CD4-positive, alpha-beta T cell (primary cell): ENCODE measurements at regions of chr7 and their contacts with region 1.

Region 1: DNA sequence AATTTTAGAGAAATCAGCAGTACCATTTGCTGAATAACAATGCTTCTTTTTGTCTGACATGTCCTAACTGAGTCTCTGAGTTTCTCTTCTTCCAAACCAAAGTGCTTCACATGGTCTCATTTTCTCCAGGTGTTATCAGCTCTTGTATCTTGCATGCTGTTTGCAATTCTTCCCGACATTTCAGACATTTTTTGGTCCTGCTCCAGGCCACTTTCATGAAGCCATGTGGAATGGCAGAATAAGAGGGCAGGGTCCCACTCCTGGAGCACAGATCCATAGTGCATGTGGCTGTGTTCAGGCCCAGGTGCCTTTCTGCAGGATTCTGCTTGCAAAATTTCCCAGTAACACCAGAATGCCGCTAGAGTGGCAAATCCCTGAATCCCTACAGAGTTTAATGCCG is 916.2 kb downstream of the NXPH1 start:
- DNase-seq: no peak
- ATAC-seq: no peak
- H3K4me3 ChIP-seq: no peak overlapping the region
- H3K4me3 Mint-ChIP-seq: no peak overlapping the region
- H3K27ac ChIP-seq: no peak overlapping the region
- H3K27ac Mint-ChIP-seq: no peak overlapping the region
- H3K4me1 ChIP-seq: no peaks in the 10 kb centered on the region
- H3K4me1 Mint-ChIP-seq: no peaks in the 10 kb centered on the region
- H3K27me3 ChIP-seq: no peaks in the 10 kb centered on the region
- H3K27me3 Mint-ChIP-seq: no peaks in the 10 kb centered on the region
- CTCF ChIP-seq: no peak

Region 2: DNA sequence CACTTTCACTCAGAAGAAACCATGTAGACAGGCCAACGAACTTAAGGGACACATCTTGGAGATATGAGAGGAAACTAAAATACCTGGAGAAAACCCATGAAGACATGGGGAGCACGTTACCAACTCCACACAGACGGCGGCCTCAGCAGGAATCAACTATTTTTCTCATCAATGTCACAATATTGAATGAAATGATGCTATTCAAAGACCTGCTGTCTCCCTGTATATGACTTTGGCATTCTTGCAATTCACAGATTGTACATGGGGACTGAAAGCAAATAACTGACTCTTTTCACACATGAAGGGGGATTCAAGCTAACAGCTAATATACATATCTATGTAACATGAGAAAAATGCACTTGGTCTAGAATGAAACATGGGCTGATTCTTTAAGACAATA is 47.2 kb before region 1 on chr7:
- CTCF ChIA-PET with region 1: no interaction called
- POLR2A ChIA-PET with region 1: no interaction called
- intact Hi-C with region 1: loop called in 1 of 2 experiments (anchors 5 kb)
- DNase-seq: no peak
- ATAC-seq: no peak
- H3K4me3 ChIP-seq: no peak overlapping the region
- H3K4me3 Mint-ChIP-seq: no peak overlapping the region
- H3K27ac ChIP-seq: no peak overlapping the region
- H3K27ac Mint-ChIP-seq: no peak overlapping the region
- H3K4me1 ChIP-seq: no peaks in the 10 kb centered on the region
- H3K4me1 Mint-ChIP-seq: no peaks in the 10 kb centered on the region
- H3K27me3 ChIP-seq: no peaks in the 10 kb centered on the region
- H3K27me3 Mint-ChIP-seq: no peaks in the 10 kb centered on the region
- CTCF ChIP-seq: no peak